K562 (cell line): ENCODE measurements at regions of chrX and their contacts with region 1.

Region 1: GRCh38 chrX:78139160-78140123 is at the start of gene TAF9B:
- DNase-seq: peak; percentile 81 to 89 (median 86)
- ATAC-seq: peak; percentile 100
- H3K4me3 ChIP-seq: peak within 1 kb of the TSS; percentile 76
- H3K27ac ChIP-seq: peak within 1 kb of the TSS; percentile 53
- H3K4me1 ChIP-seq: peaks cover 0 to 11% of the 10 kb centered on the region in 2 experiments; a peak in 1 of 5 replicates
- H3K27me3 ChIP-seq: no peaks in the 10 kb centered on the region
- CTCF ChIP-seq: no peak
- EP300 ChIP-seq: no peak
- POLR2A ChIP-seq: peak; percentile 83
- RAD21 ChIP-seq: no peak
- polyA plus RNA-seq, gene TAF9B: 19.3 to 36.5 TPM

Region 2: GRCh38 chrX:77962068-77962902 is 177.2 kb before region 1 on chrX:
- CTCF ChIA-PET with region 1: no interaction called
- POLR2A ChIA-PET with region 1: no interaction called
- in situ Hi-C with region 1: no loop called
- intact Hi-C with region 1: no loop called
- DNase-seq: no peak
- ATAC-seq: peak; percentile 71
- H3K4me3 ChIP-seq: peak overlapping the region; percentile 11; the same call in 1 of the 2 replicates
- H3K27ac ChIP-seq: peak overlapping the region; percentile 60; the same call in 2 of the 3 replicates
- H3K4me1 ChIP-seq: no peaks in the 10 kb centered on the region; a peak in 2 of 5 replicates
- H3K27me3 ChIP-seq: no peaks in the 10 kb centered on the region
- CTCF ChIP-seq: no peak
- EP300 ChIP-seq: no peak
- POLR2A ChIP-seq: no peak
- RAD21 ChIP-seq: no peak

Region 3: GRCh38 chrX:78103623-78104446 is 35.6 kb before region 1 on chrX and contains the start of gene PGK1:
- CTCF ChIA-PET with region 1: no interaction called
- POLR2A ChIA-PET with region 1: interaction called, 5 read pairs
- in situ Hi-C with region 1: no loop called
- intact Hi-C with region 1: loop called (anchors 2 kb)
- DNase-seq: peak; percentile 92 to 95 (median 94)
- ATAC-seq: peak; percentile 99
- H3K4me3 ChIP-seq: peak within 1 kb of the TSS; percentile 87
- H3K27ac ChIP-seq: peak within 1 kb of the TSS; percentile 91
- H3K4me1 ChIP-seq: peaks cover 5 to 6% of the 10 kb centered on the region in 2 experiments; a peak in 3 of 5 replicates
- H3K27me3 ChIP-seq: no peaks in the 10 kb centered on the region
- CTCF ChIP-seq: no peak
- EP300 ChIP-seq: peak; percentile 16; the same call in 1 of the 2 replicates
- POLR2A ChIP-seq: peak; percentile 91
- RAD21 ChIP-seq: no peak
- polyA plus RNA-seq, gene PGK1: 541 to 543 TPM

Region 4: DNA sequence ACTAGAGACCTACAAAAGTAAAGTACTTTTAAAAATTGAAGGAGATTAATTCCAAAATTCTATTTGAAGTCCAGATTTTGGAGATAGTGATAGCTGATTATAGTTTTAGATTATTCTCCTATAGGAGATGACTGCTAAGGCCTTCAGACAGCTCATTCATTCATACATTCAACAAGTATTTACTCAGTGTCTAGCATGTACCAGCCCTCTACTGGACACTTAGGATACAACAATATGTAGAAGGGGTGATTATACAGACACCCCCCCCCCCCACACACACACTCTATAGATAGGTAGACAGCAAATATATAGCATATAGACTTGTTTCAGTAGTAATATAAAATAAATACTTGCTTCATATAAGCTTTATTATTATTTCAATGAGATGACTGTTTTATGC is 60.4 kb after region 1 on chrX:
- CTCF ChIA-PET with region 1: no interaction called
- POLR2A ChIA-PET with region 1: no interaction called
- in situ Hi-C with region 1: no loop called
- intact Hi-C with region 1: loop called (anchors 5 kb)
- DNase-seq: peak; percentile 47 to 61 (median 49)
- ATAC-seq: peak; percentile 88
- H3K4me3 ChIP-seq: no peak overlapping the region
- H3K27ac ChIP-seq: no peak overlapping the region
- H3K4me1 ChIP-seq: no peaks in the 10 kb centered on the region
- H3K27me3 ChIP-seq: no peaks in the 10 kb centered on the region; a peak in 1 of 5 replicates
- CTCF ChIP-seq: peak in 2 of 3 experiments; percentile 32 to 43; a peak in 4 of 6 replicates
- EP300 ChIP-seq: no peak
- POLR2A ChIP-seq: no peak
- RAD21 ChIP-seq: peak in 1 of 2 experiments; percentile 36; a peak in 1 of 4 replicates

Region 5: DNA sequence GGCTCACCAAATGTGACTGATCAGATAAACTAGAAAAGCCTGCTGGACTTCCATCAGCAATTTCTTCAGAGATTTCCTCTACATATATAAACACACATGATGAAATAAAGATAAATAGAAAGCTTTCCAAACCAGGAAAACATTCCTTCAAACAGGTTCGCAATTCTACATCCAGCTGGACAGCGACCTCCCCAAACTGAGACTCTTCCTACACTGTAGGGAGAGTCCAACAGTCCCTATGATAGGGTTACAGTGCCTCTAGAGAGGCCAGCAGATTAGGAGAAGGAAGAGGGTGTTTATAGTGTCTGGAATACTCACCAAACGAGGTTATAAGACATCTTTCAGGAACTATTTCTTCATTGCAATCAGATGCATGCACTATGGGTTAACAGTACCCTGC is 303.0 kb after region 1 on chrX:
- CTCF ChIA-PET with region 1: no interaction called
- POLR2A ChIA-PET with region 1: no interaction called
- in situ Hi-C with region 1: no loop called
- intact Hi-C with region 1: no loop called
- DNase-seq: no peak
- ATAC-seq: no peak
- H3K4me3 ChIP-seq: no peak overlapping the region
- H3K27ac ChIP-seq: no peak overlapping the region
- H3K4me1 ChIP-seq: no peaks in the 10 kb centered on the region
- H3K27me3 ChIP-seq: no peaks in the 10 kb centered on the region
- CTCF ChIP-seq: no peak
- EP300 ChIP-seq: no peak
- POLR2A ChIP-seq: no peak
- RAD21 ChIP-seq: no peak

Region 6: GRCh38 chrX:78540171-78540570 is 400.7 kb after region 1 on chrX:
- CTCF ChIA-PET with region 1: no interaction called
- POLR2A ChIA-PET with region 1: no interaction called
- in situ Hi-C with region 1: no loop called
- intact Hi-C with region 1: no loop called
- DNase-seq: no peak
- ATAC-seq: no peak
- H3K4me3 ChIP-seq: no peak overlapping the region
- H3K27ac ChIP-seq: no peak overlapping the region
- H3K4me1 ChIP-seq: no peaks in the 10 kb centered on the region
- H3K27me3 ChIP-seq: no peaks in the 10 kb centered on the region
- CTCF ChIP-seq: no peak
- EP300 ChIP-seq: no peak
- POLR2A ChIP-seq: no peak
- RAD21 ChIP-seq: no peak